H1 (cell line): ENCODE measurements at regions of chr19 and their contacts with region 1.

Region 1: GRCh38 chr19:58002384-58003173 is at the start of gene ZNF606:
- DNase-seq: peak in 1 of 2 experiments; percentile 87
- H3K4me3 ChIP-seq: peak within 1 kb of the TSS; percentile 77 to 97 (median 84)
- H3K27ac ChIP-seq: peak within 1 kb of the TSS; percentile 87
- H3K4me1 ChIP-seq: peaks cover 0 to 5% (median under 1%) of the 10 kb centered on the region in 4 experiments; a peak in 2 of 7 replicates
- H3K27me3 ChIP-seq: no peaks in the 10 kb centered on the region; a peak in 1 of 7 replicates
- CTCF ChIP-seq: no peak
- EP300 ChIP-seq: no peak
- POLR2A ChIP-seq: peak; percentile 77 to 86
- RAD21 ChIP-seq: no peak
- total RNA-seq, gene ZNF606: 17.5 and 19.3 TPM in 2 replicates

Region 2: GRCh38 chr19:57934820-57935665 is 67.5 kb before region 1 on chr19 and contains the start of gene ZNF418:
- CTCF ChIA-PET with region 1: no interaction called
- POLR2A ChIA-PET with region 1: interaction called, 35 read pairs
- DNase-seq: peak; percentile 60 to 72
- H3K4me3 ChIP-seq: peak within 1 kb of the TSS; percentile 85 to 95 (median 94)
- H3K27ac ChIP-seq: peak within 1 kb of the TSS; percentile 94
- H3K4me1 ChIP-seq: peaks cover 0 to 6% (median 3%) of the 10 kb centered on the region in 4 experiments; a peak in 4 of 7 replicates
- H3K27me3 ChIP-seq: no peaks in the 10 kb centered on the region
- CTCF ChIP-seq: no peak
- EP300 ChIP-seq: peak in 1 of 2 experiments; percentile 89; a peak in 2 of 3 replicates
- POLR2A ChIP-seq: peak; percentile 87 to 89
- RAD21 ChIP-seq: no peak
- total RNA-seq, gene ZNF418: 18.5 and 18.8 TPM in 2 replicates

Region 3: DNA sequence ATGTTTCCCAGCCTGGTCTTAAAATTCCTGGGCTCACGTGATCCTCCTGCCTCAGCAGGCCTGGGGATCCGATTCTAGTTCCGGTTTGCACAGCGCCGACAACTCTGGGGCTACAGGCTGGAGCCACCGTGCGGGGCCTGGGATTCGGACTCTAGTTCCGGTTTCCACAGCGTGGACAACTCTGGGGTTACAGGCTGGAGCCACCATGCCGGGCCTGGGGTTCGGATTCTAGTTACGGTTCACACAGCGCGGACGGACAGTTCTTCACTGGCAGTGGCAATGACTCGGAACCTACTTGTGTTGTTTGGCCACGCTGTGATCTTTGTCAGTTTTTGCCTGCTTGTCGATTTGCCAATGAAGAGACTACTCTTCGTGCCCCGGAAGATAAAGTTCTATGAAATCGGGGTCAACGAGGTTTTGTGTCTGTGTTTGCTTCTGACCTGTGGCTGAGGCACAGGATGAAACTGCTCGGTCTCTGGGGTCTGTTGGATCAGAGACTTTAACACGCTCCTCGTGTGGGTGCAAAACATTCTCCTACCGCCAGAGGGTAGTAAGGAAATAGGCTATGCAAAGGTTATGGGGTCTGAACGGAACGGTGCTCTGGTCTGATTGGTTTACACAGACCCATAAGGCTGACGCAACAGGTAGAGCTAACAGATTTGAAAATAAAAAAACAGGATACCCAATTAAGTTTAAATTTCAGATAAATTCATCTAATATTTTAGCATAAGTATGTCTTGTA is 19.1 kb after region 1 on chr19:
- CTCF ChIA-PET with region 1: interaction called, 6 read pairs
- POLR2A ChIA-PET with region 1: interaction called, 18 read pairs
- DNase-seq: peak in 1 of 2 experiments; percentile 72
- H3K4me3 ChIP-seq: no peak overlapping the region
- H3K27ac ChIP-seq: no peak overlapping the region
- H3K4me1 ChIP-seq: no peaks in the 10 kb centered on the region
- H3K27me3 ChIP-seq: no peaks in the 10 kb centered on the region; a peak in 3 of 7 replicates
- CTCF ChIP-seq: peak; percentile 46 to 84 (median 71)
- EP300 ChIP-seq: no peak
- POLR2A ChIP-seq: no peak
- RAD21 ChIP-seq: peak; percentile 88 to 91

Region 4: GRCh38 chr19:58033741-58034471 is 31.3 kb after region 1 on chr19 and contains the start of gene ZSCAN1:
- CTCF ChIA-PET with region 1: no interaction called
- POLR2A ChIA-PET with region 1: interaction called, 11 read pairs
- DNase-seq: peak; percentile 70 to 96
- H3K4me3 ChIP-seq: peak within 1 kb of the TSS; percentile 49 to 77 (median 60)
- H3K27ac ChIP-seq: peak within 1 kb of the TSS; percentile 59; the same call in 1 of the 2 replicates
- H3K4me1 ChIP-seq: peaks cover 0 to 19% (median 14%) of the 10 kb centered on the region in 4 experiments; a peak in 6 of 7 replicates
- H3K27me3 ChIP-seq: peaks cover 0 to 6% (median 0%) of the 10 kb centered on the region in 4 experiments; a peak in 3 of 7 replicates
- CTCF ChIP-seq: no peak
- EP300 ChIP-seq: no peak
- POLR2A ChIP-seq: 0 out of 3 replicates have a peak, but pooled peaks of 1 of the 2 experiments have one; percentile 40
- RAD21 ChIP-seq: no peak; a peak in 1 of 4 replicates
- total RNA-seq, gene ZSCAN1: 0.69 and 1.2 TPM in 2 replicates

Region 5: DNA sequence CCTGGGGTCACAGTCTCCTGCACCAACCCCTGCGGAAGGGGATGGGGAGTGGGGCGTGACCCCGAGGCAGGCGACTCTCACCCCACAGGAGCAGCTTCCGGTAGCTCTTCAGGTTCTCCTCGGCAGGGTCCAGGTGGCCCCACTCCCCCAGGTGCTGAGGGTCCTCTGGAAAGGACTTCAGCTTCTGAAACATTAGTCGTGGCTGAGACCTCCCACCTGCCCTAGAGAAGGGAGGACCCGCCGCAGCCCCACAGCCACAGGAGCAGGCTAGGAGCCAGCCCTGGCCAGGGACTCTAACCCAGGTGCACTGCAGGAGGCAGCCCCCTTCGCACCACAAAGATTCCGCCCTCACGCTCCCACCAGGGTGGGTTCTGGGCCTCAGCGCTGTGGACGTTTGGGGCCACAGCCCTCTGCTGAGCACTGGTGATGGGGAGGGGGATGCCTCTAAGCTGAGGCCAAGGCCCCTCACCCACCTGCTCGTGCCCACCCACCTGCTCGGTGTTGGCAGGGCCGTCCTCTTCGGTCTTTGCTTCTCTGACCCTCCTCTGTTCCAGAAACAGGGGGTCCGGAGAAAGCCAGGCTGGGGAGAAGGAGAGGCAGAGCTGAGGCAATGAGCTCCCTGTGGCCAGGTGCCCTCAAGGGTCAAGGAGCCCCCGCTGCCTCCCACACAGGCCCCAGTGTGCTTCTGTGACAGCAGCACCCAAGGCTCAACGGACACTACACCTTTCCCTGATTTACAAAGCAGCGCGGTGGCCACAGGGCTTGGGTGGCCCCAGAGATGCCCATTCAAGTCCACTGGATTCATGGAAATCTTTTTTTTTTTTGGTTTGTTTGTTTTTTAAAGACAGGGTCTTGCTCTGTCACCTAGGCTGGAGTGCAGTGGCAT is 84.5 kb after region 1 on chr19:
- CTCF ChIA-PET with region 1: no interaction called
- POLR2A ChIA-PET with region 1: no interaction called
- DNase-seq: no peak
- H3K4me3 ChIP-seq: no peak overlapping the region
- H3K27ac ChIP-seq: no peak overlapping the region
- H3K4me1 ChIP-seq: 0 out of 7 replicates have a peak, but pooled peaks cover 0 to 2% (median 0%) of the 10 kb centered on the region in 4 experiments
- H3K27me3 ChIP-seq: no peaks in the 10 kb centered on the region
- CTCF ChIP-seq: no peak
- EP300 ChIP-seq: no peak
- POLR2A ChIP-seq: 0 out of 3 replicates have a peak, but pooled peaks of 1 of the 2 experiments have one; percentile 21
- RAD21 ChIP-seq: no peak

Region 6: GRCh38 chr19:58097781-58098681 is 95.5 kb after region 1 on chr19 and contains the start of gene ZSCAN18:
- CTCF ChIA-PET with region 1: no interaction called
- POLR2A ChIA-PET with region 1: interaction called, 11 read pairs
- DNase-seq: peak; percentile 94 to 100
- H3K4me3 ChIP-seq: peak within 1 kb of the TSS; percentile 82 to 99 (median 97)
- H3K27ac ChIP-seq: peak within 1 kb of the TSS; percentile 100
- H3K4me1 ChIP-seq: peaks cover 0 to 5% (median 4%) of the 10 kb centered on the region in 4 experiments; a peak in 5 of 7 replicates
- H3K27me3 ChIP-seq: no peaks in the 10 kb centered on the region
- CTCF ChIP-seq: no peak; a peak in 1 of 4 replicates
- EP300 ChIP-seq: peak in 1 of 2 experiments; percentile 96; a peak in 1 of 3 replicates
- POLR2A ChIP-seq: peak in 1 of 2 experiments; percentile 46; a peak in 2 of 3 replicates
- RAD21 ChIP-seq: no peak; a peak in 1 of 4 replicates
- total RNA-seq, gene ZSCAN18: 37.0 and 37.6 TPM in 2 replicates

Region 7: GRCh38 chr19:58128041-58128685 is 125.6 kb after region 1 on chr19:
- CTCF ChIA-PET with region 1: no interaction called
- POLR2A ChIA-PET with region 1: no interaction called
- DNase-seq: no peak
- H3K4me3 ChIP-seq: 0 out of 8 replicates have a peak overlapping the region, but pooled peaks of 1 of the 4 experiments have one; percentile 14
- H3K27ac ChIP-seq: no peak overlapping the region
- H3K4me1 ChIP-seq: no peaks in the 10 kb centered on the region
- H3K27me3 ChIP-seq: no peaks in the 10 kb centered on the region
- CTCF ChIP-seq: no peak
- EP300 ChIP-seq: no peak
- POLR2A ChIP-seq: no peak
- RAD21 ChIP-seq: no peak

Region 8: GRCh38 chr19:58154679-58155648 is 152.4 kb after region 1 on chr19:
- CTCF ChIA-PET with region 1: interaction called, 5 read pairs
- POLR2A ChIA-PET with region 1: interaction called, 13 read pairs
- DNase-seq: peak; percentile 82 to 100
- H3K4me3 ChIP-seq: peak overlapping the region; percentile 74 to 91 (median 82)
- H3K27ac ChIP-seq: peak overlapping the region; percentile 75; the same call in 1 of the 2 replicates
- H3K4me1 ChIP-seq: no peaks in the 10 kb centered on the region; a peak in 2 of 7 replicates
- H3K27me3 ChIP-seq: no peaks in the 10 kb centered on the region
- CTCF ChIP-seq: peak; percentile 97 to 98 (median 97)
- EP300 ChIP-seq: 0 out of 3 replicates have a peak, but pooled peaks of 1 of the 2 experiments have one; percentile 23
- POLR2A ChIP-seq: peak in 1 of 2 experiments; percentile 72; a peak in 2 of 3 replicates
- RAD21 ChIP-seq: peak; percentile 99